Activated CD8-positive, alpha-beta memory T cell treated with anti-CD3 and anti-CD28 coated beads, Interleukin-2, amount 10 ng/mL, durations not matched to agents 7 days and 5 days (primary cell): ENCODE measurements at regions of chr15 and their contacts with region 1.

Region 1: DNA sequence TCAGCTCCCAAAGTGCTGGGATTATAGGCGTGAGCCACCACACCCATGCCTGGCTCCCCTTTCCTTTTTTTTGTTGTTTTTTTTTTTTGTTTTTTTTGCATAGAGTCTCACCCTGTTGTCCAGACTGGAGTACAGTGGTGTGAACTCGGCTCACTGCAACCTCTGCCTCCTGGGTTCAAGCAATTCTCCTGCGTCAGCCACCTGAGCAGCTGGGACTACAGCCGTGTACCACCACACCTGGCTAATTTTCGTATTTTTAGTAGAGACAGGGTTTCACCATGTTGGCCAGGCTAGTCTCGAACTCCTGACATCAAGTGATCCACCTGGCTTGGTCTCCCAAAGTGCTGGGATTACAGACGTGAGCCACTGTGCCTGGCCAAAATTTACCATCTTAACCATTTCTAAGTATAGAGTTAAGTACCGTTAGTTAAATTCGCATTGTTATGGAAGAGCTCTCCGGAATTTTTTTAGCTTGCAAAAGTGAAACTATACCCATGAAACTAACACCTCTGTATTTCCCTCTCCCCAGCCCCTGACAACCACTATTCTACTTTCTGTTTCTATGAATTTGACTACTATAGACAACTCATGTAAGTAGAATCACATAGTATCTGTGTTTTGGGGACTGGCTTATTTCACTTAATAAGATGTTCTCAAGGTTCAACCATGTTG is 70.9 kb upstream of the C15orf39 start:
- DNase-seq: peak; percentile 47
- ATAC-seq: peak; percentile 97
- H3K4me3 Mint-ChIP-seq: peak overlapping the region; percentile 72
- H3K27ac Mint-ChIP-seq: peak overlapping the region; percentile 79
- H3K4me1 Mint-ChIP-seq: peaks cover 32% of the 10 kb centered on the region
- H3K27me3 Mint-ChIP-seq: peaks cover 32% of the 10 kb centered on the region

Region 2: GRCh38 chr15:75069301-75069925 is 61.3 kb before region 1 on chr15:
- CTCF ChIA-PET with region 1: interaction called, 10 read pairs
- DNase-seq: no peak
- ATAC-seq: no peak
- H3K4me3 Mint-ChIP-seq: no peak overlapping the region
- H3K27ac Mint-ChIP-seq: peak overlapping the region; percentile 39
- H3K4me1 Mint-ChIP-seq: peaks cover 60% of the 10 kb centered on the region
- H3K27me3 Mint-ChIP-seq: no peaks in the 10 kb centered on the region

Region 3: DNA sequence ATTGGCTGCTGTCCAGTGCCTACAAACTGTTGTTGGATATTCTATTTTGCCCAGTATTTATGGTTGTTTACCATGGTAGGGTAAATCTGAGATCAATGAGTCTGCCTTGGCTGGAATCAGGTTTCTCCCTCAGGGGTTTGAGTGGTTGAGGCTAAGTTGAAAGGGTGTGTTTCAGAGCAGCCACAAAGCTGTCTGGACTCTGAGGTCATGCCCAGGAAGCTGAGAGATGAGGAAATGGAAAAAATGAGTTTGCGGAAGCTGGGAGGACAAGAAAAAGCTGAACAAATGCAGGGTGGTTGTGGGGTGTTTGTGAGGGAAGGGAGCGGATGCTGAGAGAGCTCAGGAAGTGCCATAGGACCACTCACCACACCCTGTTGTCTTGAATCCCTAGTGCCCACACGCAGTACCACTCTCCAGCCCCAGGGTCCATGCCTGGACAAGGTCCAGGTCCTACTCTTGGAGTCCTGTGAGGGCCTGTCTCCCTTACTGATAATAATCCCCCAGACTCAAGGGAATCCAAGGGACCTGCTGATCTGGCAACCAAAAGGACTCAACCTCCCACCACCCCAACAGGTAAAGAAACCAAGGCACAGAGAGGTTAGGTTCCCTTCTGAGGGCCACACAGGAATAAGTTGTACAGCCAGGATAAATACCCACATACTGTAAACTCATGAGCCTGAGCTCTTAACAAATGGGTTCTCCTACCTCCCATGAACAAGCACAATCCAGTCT is 25.8 kb before region 1 on chr15:
- CTCF ChIA-PET with region 1: interaction called, 34 read pairs
- DNase-seq: peak; percentile 72
- ATAC-seq: peak; percentile 29
- H3K4me3 Mint-ChIP-seq: no peak overlapping the region
- H3K27ac Mint-ChIP-seq: peak overlapping the region; percentile 83
- H3K4me1 Mint-ChIP-seq: peaks cover 42% of the 10 kb centered on the region
- H3K27me3 Mint-ChIP-seq: peaks cover 18% of the 10 kb centered on the region